K562 (cell line): ENCODE measurements at regions of chr5 and their contacts with region 1.

Region 1: DNA sequence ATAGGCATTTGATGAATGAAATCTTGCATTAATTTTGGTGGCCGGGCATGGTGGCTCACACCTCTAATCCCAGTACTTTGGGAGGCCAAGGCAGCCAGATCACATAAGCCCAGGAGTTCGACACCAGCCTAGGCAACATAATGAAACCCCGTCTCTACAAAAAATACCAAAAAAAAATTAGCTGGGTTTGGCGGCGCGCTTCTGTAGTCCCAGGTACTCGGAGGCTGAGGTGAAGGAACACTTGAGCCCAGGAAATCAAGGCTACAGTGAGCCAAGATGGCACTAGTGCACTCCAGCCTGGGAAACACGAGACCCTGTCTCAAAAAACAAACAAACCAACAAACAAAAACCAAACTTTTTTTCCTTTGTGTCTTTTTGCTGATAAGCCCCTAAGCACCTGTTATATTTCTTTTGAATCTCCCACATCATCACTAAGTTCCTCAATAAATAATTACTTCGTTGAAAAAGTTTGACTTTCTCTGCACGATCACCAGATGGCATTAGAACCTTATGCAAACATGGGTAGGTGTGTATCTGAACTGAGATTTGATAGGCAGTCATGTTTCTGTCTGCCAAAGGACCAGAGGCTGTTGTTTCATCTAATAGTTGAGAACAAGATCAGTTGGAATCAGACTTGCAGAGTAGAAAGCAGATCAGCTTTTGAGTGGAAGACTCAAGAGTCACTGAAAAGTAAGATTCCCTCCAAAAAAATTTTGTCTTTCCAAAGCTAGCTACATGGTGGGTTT is 5.5 kb upstream of the MATR3 start:
- DNase-seq: no peak
- ATAC-seq: peak; percentile 8; the same call in 1 of the 3 replicates
- H3K4me3 ChIP-seq: no peak overlapping the region
- H3K27ac ChIP-seq: no peak overlapping the region
- H3K4me1 ChIP-seq: peaks cover 0 to 6% of the 10 kb centered on the region in 2 experiments; a peak in 2 of 5 replicates
- H3K27me3 ChIP-seq: no peaks in the 10 kb centered on the region
- CTCF ChIP-seq: peak; percentile 5 to 39 (median 13); a peak in 3 of 6 replicates
- EP300 ChIP-seq: no peak
- POLR2A ChIP-seq: no peak
- RAD21 ChIP-seq: peak in 1 of 2 experiments; percentile 48; a peak in 2 of 4 replicates

Region 2: GRCh38 chr5:139273572-139274289 is 14.3 kb before region 1 on chr5:
- CTCF ChIA-PET with region 1: no interaction called
- POLR2A ChIA-PET with region 1: interaction called, 38 read pairs
- in situ Hi-C with region 1: no loop called
- intact Hi-C with region 1: loop called (anchors 1 kb)
- DNase-seq: peak; percentile 94 to 98 (median 98)
- ATAC-seq: peak; percentile 92
- H3K4me3 ChIP-seq: peak overlapping the region; percentile 72
- H3K27ac ChIP-seq: peak overlapping the region; percentile 92
- H3K4me1 ChIP-seq: peaks cover 12 to 56% of the 10 kb centered on the region in 2 experiments
- H3K27me3 ChIP-seq: no peaks in the 10 kb centered on the region
- CTCF ChIP-seq: peak; percentile 6 to 30 (median 13); a peak in 2 of 6 replicates
- EP300 ChIP-seq: peak; percentile 58; the same call in 1 of the 2 replicates
- POLR2A ChIP-seq: peak; percentile 97
- RAD21 ChIP-seq: no peak

Region 3: GRCh38 chr5:139417214-139417613 is 129.2 kb after region 1 on chr5:
- CTCF ChIA-PET with region 1: no interaction called
- POLR2A ChIA-PET with region 1: no interaction called
- in situ Hi-C with region 1: no loop called
- intact Hi-C with region 1: loop called (anchors 5 kb)
- DNase-seq: no peak
- ATAC-seq: no peak
- H3K4me3 ChIP-seq: no peak overlapping the region
- H3K27ac ChIP-seq: no peak overlapping the region
- H3K4me1 ChIP-seq: peaks cover 4 to 13% of the 10 kb centered on the region in 2 experiments
- H3K27me3 ChIP-seq: no peaks in the 10 kb centered on the region
- CTCF ChIP-seq: no peak
- EP300 ChIP-seq: no peak
- POLR2A ChIP-seq: no peak
- RAD21 ChIP-seq: no peak